ENCODE measurements at regions of chr2 and their contacts with region 1.

Region 1: DNA sequence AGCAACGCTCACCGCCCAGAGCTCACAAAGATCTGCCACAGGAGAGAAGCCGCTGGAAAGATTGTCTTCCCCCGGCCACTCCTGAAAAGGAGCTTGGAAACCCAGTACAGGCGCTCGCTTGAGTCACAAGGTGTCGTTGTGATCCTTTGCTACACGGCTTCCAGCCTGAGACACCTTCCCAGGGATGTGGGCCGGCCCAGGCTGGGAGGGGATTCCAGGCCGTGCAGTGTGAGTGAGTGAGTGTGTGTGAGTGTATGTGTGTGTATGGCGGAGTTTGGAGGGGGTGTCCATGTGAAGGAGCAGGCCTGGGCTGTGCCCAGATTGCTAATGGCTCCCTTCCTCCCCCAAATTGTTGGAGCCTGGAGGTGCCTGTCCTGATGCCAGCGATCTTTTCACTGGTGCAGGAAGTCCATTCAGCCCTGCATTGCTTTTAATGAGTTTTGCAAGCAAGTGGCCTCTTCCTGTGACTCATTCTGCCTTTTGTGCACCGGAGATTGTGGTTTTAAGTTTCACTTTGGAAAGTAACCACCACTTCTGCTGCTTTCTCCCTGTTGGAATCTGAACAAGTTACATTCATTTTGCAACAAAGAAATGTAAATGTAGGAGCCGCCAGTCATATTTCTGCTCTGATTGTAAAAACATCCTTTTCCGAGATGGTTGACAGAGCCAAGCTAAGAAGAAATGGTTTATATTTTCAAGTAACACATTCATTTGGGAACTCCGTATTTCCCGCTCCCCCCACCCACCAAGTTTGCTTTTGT is 83.7 kb downstream of the LPIN1 start:
- DNase-seq: peak; percentile 80
- H3K4me3 Mint-ChIP-seq: peak overlapping the region; percentile 1
- H3K27ac Mint-ChIP-seq: peak overlapping the region; percentile 10
- H3K4me1 Mint-ChIP-seq: peaks cover 42% of the 10 kb centered on the region
- H3K27me3 Mint-ChIP-seq: no peaks in the 10 kb centered on the region

Region 2: DNA sequence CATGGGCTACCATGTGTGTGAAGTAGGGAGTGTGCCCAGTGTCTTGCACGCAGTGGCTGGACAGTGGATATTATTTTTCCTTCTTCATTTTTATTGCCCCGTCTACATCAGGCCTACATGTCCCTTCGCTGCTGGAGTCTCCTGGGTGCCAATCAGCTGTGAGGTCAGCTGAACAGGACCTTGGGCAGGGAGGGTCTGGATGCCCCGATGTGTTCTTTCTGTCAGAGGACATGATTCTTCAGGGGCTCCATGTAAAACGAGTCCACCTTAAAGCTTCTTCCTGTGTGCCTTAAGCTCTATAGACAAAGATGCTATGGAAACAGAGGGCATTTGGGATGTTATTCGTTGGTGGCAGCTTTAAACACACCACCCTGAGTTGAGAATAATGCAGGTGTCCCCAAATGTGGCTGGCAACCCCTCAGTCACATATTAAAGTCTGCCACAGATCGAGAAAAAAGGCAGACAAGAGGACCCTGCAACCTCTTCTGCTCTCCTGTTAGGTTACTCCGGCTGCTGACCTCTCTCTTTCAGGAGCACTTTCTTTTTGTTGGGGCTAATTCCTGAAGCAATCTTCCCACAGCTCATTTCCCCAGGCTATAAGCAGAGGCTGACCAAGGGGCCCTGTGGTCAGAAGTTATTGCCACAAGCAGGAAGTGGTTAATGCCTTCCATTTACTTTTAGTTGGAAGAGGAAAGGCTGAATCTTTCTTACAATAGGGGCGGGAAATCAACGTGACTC is 276.3 kb before region 1 on chr2:
- CTCF ChIA-PET with region 1: no interaction called
- intact Hi-C with region 1: no loop called
- DNase-seq: no peak
- H3K4me3 Mint-ChIP-seq: no peak overlapping the region
- H3K27ac Mint-ChIP-seq: no peak overlapping the region
- H3K4me1 Mint-ChIP-seq: no peaks in the 10 kb centered on the region
- H3K27me3 Mint-ChIP-seq: peaks cover 34% of the 10 kb centered on the region

Region 3: GRCh38 chr2:11863513-11864328 is 33.6 kb after region 1 on chr2:
- CTCF ChIA-PET with region 1: interaction called, 5 read pairs
- intact Hi-C with region 1: loop called (anchors 1 kb)
- DNase-seq: peak; percentile 74
- H3K4me3 Mint-ChIP-seq: no peak overlapping the region
- H3K27ac Mint-ChIP-seq: no peak overlapping the region
- H3K4me1 Mint-ChIP-seq: peaks cover 22% of the 10 kb centered on the region
- H3K27me3 Mint-ChIP-seq: peaks cover 2% of the 10 kb centered on the region

Region 4: GRCh38 chr2:12127638-12128037 is 297.5 kb after region 1 on chr2:
- CTCF ChIA-PET with region 1: no interaction called
- intact Hi-C with region 1: loop called (anchors 1 kb)
- DNase-seq: peak; percentile 37
- H3K4me3 Mint-ChIP-seq: no peak overlapping the region
- H3K27ac Mint-ChIP-seq: peak overlapping the region; percentile 74
- H3K4me1 Mint-ChIP-seq: peaks cover 2% of the 10 kb centered on the region
- H3K27me3 Mint-ChIP-seq: no peaks in the 10 kb centered on the region

Region 5: DNA sequence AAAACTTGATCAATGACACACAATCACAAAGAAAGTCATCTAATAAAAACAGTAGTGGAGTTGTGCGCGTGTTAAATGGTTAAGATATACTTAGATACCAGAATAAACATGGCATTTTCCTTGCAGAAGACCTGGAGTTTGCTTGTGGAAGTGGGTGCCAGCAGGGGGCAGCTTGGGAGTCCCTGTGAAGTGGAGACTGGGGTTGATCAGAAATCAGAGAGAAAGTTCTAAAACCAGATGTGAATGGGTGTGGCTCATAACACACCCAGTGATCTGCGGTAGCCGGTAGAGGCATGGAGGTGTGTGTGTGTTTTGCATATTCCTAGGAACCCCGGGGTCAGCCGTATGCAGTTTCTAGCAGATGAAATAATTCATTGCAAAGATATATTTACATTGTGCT is 586.5 kb after region 1 on chr2:
- CTCF ChIA-PET with region 1: no interaction called
- intact Hi-C with region 1: loop called (anchors 1 kb)
- DNase-seq: peak; percentile 72
- H3K4me3 Mint-ChIP-seq: no peak overlapping the region
- H3K27ac Mint-ChIP-seq: no peak overlapping the region
- H3K4me1 Mint-ChIP-seq: peaks cover 34% of the 10 kb centered on the region
- H3K27me3 Mint-ChIP-seq: no peaks in the 10 kb centered on the region

Region 6: GRCh38 chr2:12716282-12717190 is 886.4 kb after region 1 on chr2 and contains the start of gene TRIB2:
- CTCF ChIA-PET with region 1: interaction called, 21 read pairs
- intact Hi-C with region 1: loop called (anchors 1 kb)
- DNase-seq: peak; percentile 84
- H3K4me3 Mint-ChIP-seq: peak within 1 kb of the TSS; percentile 96
- H3K27ac Mint-ChIP-seq: peak within 1 kb of the TSS; percentile 76
- H3K4me1 Mint-ChIP-seq: peaks cover 46% of the 10 kb centered on the region
- H3K27me3 Mint-ChIP-seq: peaks cover 1% of the 10 kb centered on the region
- total RNA-seq, gene TRIB2: 3.7 to 4.4 TPM

Region 7: DNA sequence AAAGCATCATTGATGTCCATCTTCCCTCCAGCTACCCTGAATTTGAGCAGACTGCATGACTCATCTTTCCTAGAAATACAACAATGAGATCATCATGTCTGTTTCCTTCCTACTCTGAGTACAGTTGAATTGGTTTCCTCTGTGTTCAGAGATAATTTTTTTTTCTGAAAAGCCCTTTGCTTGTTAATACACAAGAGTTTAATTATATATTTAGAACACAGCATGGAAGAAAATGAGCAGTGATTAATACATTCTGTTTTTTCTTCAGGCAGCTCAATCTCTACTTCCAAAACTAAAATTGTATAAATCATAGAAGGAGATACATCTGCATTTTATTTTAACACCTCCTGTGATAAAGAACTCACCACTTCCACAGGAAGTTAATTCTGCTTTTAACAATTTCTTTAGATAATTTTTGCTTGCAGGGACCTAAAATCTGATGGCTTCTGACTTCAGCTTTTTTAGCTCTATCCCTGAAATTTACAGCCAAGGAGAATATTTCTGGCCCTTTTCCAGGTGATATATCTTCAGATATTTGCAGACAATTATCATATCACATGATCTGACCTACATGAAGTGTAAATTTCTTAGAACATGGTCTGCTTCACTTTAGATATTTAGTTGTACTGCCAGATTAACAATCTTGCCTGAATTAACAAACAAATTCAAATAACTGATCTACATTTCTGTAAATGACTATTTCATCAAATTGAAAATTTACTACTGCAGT is 1135.6 kb after region 1 on chr2:
- CTCF ChIA-PET with region 1: no interaction called
- intact Hi-C with region 1: loop called (anchors 1 kb)
- DNase-seq: no peak
- H3K4me3 Mint-ChIP-seq: no peak overlapping the region
- H3K27ac Mint-ChIP-seq: no peak overlapping the region
- H3K4me1 Mint-ChIP-seq: peaks cover 14% of the 10 kb centered on the region
- H3K27me3 Mint-ChIP-seq: peaks cover 2% of the 10 kb centered on the region